MCF 10A (cell line): ENCODE measurements at regions of chr3 and their contacts with region 1.

Region 1: DNA sequence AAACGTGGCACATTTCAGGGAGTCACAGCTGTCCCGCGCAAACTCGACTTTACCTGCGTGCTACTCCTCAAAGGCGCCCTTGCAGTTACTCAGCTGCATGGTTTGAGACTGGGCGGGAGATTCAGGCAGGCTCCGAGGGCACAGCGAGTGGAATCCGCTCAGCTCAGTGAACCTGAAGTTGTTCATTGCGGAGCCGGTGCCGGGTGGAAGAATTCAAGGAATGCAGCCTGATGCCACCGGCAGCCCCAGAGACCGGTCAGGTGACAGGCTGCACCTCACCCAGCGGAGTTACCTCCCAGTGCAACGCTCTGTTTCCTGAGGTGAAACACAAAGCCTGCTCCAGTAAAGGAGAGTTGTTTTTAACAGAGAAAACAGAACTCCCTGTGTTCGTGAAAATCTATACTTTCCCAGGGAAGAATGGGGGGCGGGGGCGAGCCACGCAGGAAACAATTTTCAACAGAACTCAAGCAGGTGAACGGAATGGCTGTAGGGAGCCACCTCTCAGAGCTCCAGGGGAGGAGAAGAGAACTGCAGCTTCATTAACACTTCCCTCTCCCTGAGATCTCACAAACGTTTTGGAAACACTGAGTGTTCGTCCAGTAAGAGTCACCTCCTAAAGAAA is 3.8 kb downstream of the VEPH1 start:
- DNase-seq: peak; percentile 49
- H3K4me3 Mint-ChIP-seq: peak overlapping the region; percentile 81
- H3K27ac Mint-ChIP-seq: peak overlapping the region; percentile 82
- H3K4me1 Mint-ChIP-seq: peaks cover 21% of the 10 kb centered on the region
- H3K27me3 Mint-ChIP-seq: no peaks in the 10 kb centered on the region
- CTCF ChIP-seq: no peak

Region 2: GRCh38 chr3:157174649-157175498 is 324.6 kb before region 1 on chr3:
- CTCF ChIA-PET with region 1: no interaction called
- POLR2A ChIA-PET with region 1: interaction called, 20 read pairs
- intact Hi-C with region 1: no loop called
- DNase-seq: peak; percentile 99
- H3K4me3 Mint-ChIP-seq: peak overlapping the region; percentile 83
- H3K27ac Mint-ChIP-seq: peak overlapping the region; percentile 98
- H3K4me1 Mint-ChIP-seq: peaks cover 6% of the 10 kb centered on the region
- H3K27me3 Mint-ChIP-seq: no peaks in the 10 kb centered on the region
- CTCF ChIP-seq: no peak